GM10248 (cell line): ENCODE measurements at regions of chr2 and their contacts with region 1.

Region 1: DNA sequence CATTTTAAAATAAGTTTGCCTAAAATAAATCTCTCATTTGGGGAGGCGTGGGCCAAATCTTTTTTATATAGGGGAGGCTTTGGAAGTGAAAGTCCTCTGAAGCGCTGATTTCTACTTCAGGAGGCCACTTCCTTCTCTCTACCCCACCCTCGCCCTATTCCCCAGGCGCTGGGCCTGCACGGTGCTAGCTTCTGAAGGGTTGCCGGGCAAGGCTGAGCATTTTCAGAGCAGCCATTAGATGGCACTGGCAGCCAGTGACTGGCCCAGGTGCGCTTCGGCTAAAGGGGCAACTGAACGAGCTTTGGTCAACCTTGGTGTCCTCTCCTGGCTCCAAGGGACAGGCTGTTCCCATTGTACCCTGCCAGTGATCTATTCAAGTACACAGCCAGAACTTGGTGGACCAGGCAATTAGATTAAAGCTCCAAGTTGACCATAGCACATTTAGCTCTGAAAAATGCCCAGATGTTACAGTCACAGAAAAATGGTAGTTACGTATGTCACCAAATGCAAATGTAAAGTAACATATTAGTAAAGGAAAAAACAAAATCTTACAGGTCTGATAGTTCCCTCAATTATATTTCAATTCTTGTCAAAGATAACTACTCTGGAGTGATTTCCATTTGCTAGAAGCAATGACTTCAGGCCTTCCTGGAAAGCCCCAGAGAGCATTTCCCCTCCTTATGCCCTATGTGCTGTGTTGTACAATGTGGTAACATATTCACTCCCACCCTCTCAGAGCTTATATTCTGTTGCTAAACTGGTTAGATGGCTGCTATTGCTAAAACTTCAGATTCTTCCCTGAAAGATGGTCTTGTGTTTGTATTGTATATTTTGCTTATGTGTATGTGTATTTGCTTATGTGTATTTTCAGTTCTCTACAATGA is 2.1 kb downstream of the POMC start:
- DNase-seq: peak; percentile 81
- CTCF ChIP-seq: peak; percentile 60

Region 2: GRCh38 chr2:25155401-25155800 is 10.8 kb before region 1 on chr2:
- CTCF ChIA-PET with region 1: interaction called, 13 read pairs
- POLR2A ChIA-PET with region 1: no interaction called
- DNase-seq: no peak
- CTCF ChIP-seq: no peak

Region 3: GRCh38 chr2:25294573-25295462 is 128.6 kb after region 1 on chr2:
- CTCF ChIA-PET with region 1: no interaction called
- POLR2A ChIA-PET with region 1: no interaction called
- DNase-seq: peak; percentile 87
- CTCF ChIP-seq: no peak